ENCODE measurements at regions of chr3 and their contacts with region 1.

Region 1: DNA sequence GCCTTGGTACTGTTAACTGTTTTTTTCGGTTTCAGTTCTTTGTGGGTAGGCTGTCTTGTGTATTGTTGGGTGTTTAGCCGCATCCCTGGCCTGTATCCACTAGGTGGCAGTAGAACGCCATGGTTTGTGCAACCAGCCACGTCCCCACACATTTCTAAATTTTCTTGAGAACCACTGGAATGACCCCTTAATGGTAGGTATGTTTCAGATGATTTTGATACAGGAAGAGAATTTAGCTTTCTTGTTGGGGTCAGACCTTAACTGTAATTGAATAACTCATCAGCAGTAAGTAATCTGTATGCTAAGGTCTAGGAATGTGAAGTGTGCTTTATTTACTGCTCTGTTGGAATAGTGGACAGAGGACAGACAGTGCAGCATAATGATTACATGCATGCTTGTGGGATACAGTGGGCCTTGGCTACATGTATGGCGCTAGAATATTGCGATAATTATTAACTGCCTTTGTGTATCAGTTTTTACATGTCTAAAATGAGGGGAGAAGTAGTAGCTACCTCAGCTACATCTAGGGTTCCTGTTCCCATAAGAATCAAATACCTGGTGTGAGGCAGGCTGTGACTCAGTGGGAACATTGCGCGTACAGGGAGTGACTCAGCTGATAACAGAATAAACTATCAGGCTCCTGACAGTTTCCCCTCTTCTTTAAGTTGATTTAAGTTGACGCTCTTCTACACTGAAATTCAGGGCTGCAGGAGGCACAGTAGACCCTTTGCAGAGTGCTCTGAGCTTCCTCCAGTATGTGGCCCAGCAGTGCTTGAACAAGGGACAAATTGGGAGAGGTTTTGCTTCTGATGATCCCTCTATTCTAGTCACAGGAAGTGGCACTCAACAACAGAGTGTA is 25.0 kb upstream of the GPR171 start:
- DNase-seq: peak; percentile 60
- ATAC-seq: peak; percentile 96
- H3K4me3 ChIP-seq: no peak overlapping the region
- H3K27ac ChIP-seq: no peak overlapping the region
- H3K4me1 ChIP-seq: peaks cover 9% of the 10 kb centered on the region
- H3K27me3 ChIP-seq: no peaks in the 10 kb centered on the region
- CTCF ChIP-seq: peak; percentile 85 to 95 (median 89); a peak in 5 of 6 replicates
- EP300 ChIP-seq: 0 out of 4 replicates have a peak, but pooled peaks of 1 of the 2 experiments have one; percentile 25
- POLR2A ChIP-seq: no peak
- RAD21 ChIP-seq: peak; percentile 94

Region 2: DNA sequence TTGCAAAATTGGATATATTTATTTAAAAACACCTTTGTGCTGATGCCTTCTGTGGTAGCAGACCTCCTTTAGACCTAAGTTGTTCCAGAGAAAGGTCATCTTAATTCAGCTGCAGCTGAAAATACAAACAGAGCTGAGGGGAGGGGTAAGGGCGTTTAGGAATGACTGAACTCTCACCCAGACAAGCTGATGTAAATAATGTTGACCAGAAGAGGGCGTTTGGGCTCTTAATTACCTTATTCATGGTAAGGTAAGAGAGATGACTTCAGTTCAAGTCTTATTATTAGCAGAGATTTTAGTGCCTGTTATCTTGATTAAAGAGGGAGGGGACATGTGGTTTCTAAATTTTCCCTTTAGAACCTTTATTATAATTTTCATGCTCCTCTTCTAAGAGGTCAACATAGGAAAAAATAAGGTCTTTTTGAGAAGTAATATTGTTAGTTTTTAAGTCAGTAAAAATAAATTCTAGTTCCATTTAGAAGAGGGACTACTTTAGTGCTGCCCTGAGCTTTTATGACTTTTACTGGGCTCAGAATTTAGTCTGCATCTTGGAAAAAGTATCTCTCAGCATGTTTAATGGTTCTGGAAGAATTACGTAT is 71.3 kb before region 1 on chr3:
- CTCF ChIA-PET with region 1: interaction called, 14 read pairs
- POLR2A ChIA-PET with region 1: no interaction called
- RAD21 ChIA-PET with region 1: interaction called, 3 read pairs
- SMC1A ChIA-PET with region 1: no interaction called
- in situ Hi-C with region 1: no loop called
- intact Hi-C with region 1: no loop called
- DNase-seq: no peak
- ATAC-seq: peak; percentile 96
- H3K4me3 ChIP-seq: no peak overlapping the region
- H3K27ac ChIP-seq: no peak overlapping the region
- H3K4me1 ChIP-seq: no peaks in the 10 kb centered on the region
- H3K27me3 ChIP-seq: no peaks in the 10 kb centered on the region
- CTCF ChIP-seq: peak; percentile 57 to 72 (median 60)
- EP300 ChIP-seq: no peak
- POLR2A ChIP-seq: no peak
- RAD21 ChIP-seq: peak; percentile 35

Region 3: DNA sequence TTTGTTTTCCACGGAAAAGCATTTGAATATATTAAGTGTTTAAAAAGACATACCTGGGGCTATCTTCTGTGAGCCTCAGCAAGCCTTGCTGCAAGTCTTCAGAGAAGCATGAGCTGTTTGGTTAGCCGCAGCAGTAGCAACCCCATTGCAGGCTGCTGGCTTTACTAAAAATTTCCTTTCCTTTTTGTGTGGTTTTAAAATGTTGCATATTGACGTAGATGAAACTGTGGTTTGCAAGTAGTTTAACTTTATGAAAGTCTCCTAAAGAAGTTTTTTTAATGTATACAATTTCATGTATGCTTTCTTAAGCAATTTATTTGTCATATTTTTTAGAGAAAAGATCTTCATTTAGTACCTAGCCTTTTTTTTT is 25.0 kb before region 1 on chr3 and contains the start of gene GPR171:
- CTCF ChIA-PET with region 1: interaction called, 21 read pairs
- POLR2A ChIA-PET with region 1: no interaction called
- RAD21 ChIA-PET with region 1: interaction called, 5 read pairs
- SMC1A ChIA-PET with region 1: interaction called, 22 read pairs
- in situ Hi-C with region 1: no loop called
- intact Hi-C with region 1: no loop called
- DNase-seq: peak; percentile 33
- ATAC-seq: peak; percentile 97
- H3K4me3 ChIP-seq: no peak within 1 kb of the TSS
- H3K27ac ChIP-seq: no peak within 1 kb of the TSS
- H3K4me1 ChIP-seq: no peaks in the 10 kb centered on the region; the same call in 1 of the 2 replicates
- H3K27me3 ChIP-seq: no peaks in the 10 kb centered on the region; a peak in 1 of 4 replicates
- CTCF ChIP-seq: no peak
- EP300 ChIP-seq: peak; percentile 82 to 87
- POLR2A ChIP-seq: no peak
- RAD21 ChIP-seq: no peak
- polyA plus RNA-seq, gene GPR171: 0.05 TPM in 1 of 2 experiments, not detected in the other

Region 4: DNA sequence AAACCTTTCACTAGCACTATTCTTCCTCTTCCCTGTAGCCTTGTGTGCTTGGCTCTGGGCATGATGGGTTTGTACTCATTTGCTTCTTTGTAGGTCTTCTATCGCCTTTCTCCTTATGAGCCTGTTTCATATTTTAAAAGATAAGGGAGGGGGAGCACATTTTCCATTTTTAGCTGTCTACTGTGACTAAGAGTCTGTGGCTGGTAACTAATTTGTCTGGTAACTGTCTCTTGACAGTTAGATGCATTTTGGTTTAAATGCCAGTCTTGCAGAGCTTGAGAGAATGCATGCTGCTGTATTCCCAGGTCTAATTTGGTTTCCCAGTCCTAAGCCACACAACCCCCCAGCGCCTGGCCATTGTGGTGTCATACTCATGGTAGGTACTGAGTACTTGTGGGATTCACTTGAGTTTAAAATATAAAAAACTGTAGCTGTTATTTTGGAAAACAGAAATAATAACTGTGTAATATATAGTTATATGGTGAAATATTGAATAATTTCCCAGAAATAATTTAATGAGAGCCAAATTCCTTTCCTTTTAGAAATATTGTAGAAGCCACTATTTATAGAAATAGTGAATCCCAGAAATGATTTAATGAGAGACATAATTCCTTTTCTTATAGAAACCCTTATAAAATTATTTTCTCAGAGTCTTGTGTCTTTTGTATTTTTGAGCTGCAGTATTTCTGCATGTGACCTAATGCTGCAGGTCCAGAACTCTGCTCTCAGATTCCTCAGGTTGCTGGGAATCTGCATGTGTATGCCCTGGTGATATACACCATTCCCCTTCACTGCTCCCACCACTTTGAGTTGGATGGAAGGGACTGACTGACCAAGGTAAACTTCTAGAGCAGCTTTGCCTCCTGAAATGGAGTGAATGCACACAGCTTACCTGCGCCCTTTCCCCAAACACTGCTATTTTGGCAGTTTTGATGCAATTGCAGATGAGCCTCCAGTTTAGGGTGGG is 11.1 kb before region 1 on chr3:
- CTCF ChIA-PET with region 1: interaction called, 10 read pairs
- POLR2A ChIA-PET with region 1: no interaction called
- RAD21 ChIA-PET with region 1: no interaction called
- SMC1A ChIA-PET with region 1: interaction called, 8 read pairs
- in situ Hi-C with region 1: no loop called
- intact Hi-C with region 1: no loop called
- DNase-seq: no peak
- ATAC-seq: no peak
- H3K4me3 ChIP-seq: no peak overlapping the region
- H3K27ac ChIP-seq: no peak overlapping the region
- H3K4me1 ChIP-seq: no peaks in the 10 kb centered on the region
- H3K27me3 ChIP-seq: peaks cover 0 to 2% of the 10 kb centered on the region in 2 experiments; a peak in 2 of 4 replicates
- CTCF ChIP-seq: no peak
- EP300 ChIP-seq: no peak
- POLR2A ChIP-seq: no peak
- RAD21 ChIP-seq: no peak

Region 5: GRCh38 chr3:151276687-151277042 is 48.6 kb after region 1 on chr3:
- CTCF ChIA-PET with region 1: interaction called, 182 read pairs
- POLR2A ChIA-PET with region 1: interaction called, 3 read pairs
- RAD21 ChIA-PET with region 1: interaction called, 50 read pairs
- SMC1A ChIA-PET with region 1: interaction called, 98 read pairs
- in situ Hi-C with region 1: loop called (anchors 5 kb)
- intact Hi-C with region 1: no loop called
- DNase-seq: no peak
- ATAC-seq: peak; percentile 87
- H3K4me3 ChIP-seq: no peak overlapping the region; the same call in 1 of the 2 replicates
- H3K27ac ChIP-seq: no peak overlapping the region
- H3K4me1 ChIP-seq: peaks cover 36% of the 10 kb centered on the region
- H3K27me3 ChIP-seq: no peaks in the 10 kb centered on the region
- CTCF ChIP-seq: no peak
- EP300 ChIP-seq: no peak
- POLR2A ChIP-seq: no peak
- RAD21 ChIP-seq: no peak

Region 6: DNA sequence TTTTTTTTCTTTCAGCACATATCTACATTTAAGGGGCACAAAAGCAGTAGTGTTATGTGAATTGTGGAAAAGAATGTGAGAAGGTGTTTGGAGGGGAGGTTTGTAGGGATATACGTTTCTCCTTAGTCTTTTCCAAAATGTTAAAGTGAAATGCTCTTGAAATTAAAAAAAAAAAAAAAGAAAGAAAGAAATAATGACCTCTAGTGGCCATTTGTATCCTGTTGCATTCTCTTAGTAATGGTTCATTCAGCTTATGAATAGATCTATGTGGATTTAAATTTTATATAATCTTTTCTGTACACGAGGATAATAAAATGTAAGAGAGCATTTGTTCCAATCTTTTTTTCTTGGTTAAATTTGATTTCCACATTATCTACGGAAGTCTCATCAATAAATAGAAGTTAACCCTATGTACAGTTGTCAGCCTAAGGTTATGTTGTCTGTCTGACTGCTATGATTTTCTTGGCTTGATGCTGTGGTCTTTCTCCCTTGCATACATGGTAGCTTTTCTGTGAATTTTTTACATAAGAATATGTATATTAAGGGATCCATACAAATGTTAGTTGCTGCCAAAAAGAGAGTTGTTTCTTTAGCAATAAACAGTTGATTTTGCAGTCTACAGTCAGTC is 99.6 kb after region 1 on chr3:
- CTCF ChIA-PET with region 1: interaction called, 12 read pairs
- POLR2A ChIA-PET with region 1: no interaction called
- RAD21 ChIA-PET with region 1: interaction called, 3 read pairs
- SMC1A ChIA-PET with region 1: interaction called, 8 read pairs
- in situ Hi-C with region 1: no loop called
- intact Hi-C with region 1: loop called (anchors 1 kb)
- DNase-seq: no peak
- ATAC-seq: peak; percentile 73
- H3K4me3 ChIP-seq: no peak overlapping the region
- H3K27ac ChIP-seq: no peak overlapping the region
- H3K4me1 ChIP-seq: no peaks in the 10 kb centered on the region
- H3K27me3 ChIP-seq: peaks cover 0 to 3% of the 10 kb centered on the region in 2 experiments; a peak in 1 of 4 replicates
- CTCF ChIP-seq: peak in 2 of 3 experiments; percentile 40 to 47; a peak in 4 of 6 replicates
- EP300 ChIP-seq: no peak
- POLR2A ChIP-seq: no peak
- RAD21 ChIP-seq: 0 out of 2 replicates have a peak, but pooled peaks have one; percentile 4